ENCODE measurements at regions of chr11 and their contacts with region 1.

Region 1: GRCh38 chr11:11028017-11028692 is 170.3 kb upstream of the ZBED5 start:
- DNase-seq: peak; percentile 86
- ATAC-seq: peak; percentile 99
- H3K4me3 Mint-ChIP-seq: no peak overlapping the region
- H3K27ac Mint-ChIP-seq: no peak overlapping the region
- H3K4me1 Mint-ChIP-seq: 0 out of 2 replicates have a peak, but pooled peaks cover 2% of the 10 kb centered on the region
- H3K27me3 Mint-ChIP-seq: no peaks in the 10 kb centered on the region; the same call in 1 of the 2 replicates
- CTCF ChIP-seq: peak; percentile 75

Region 2: DNA sequence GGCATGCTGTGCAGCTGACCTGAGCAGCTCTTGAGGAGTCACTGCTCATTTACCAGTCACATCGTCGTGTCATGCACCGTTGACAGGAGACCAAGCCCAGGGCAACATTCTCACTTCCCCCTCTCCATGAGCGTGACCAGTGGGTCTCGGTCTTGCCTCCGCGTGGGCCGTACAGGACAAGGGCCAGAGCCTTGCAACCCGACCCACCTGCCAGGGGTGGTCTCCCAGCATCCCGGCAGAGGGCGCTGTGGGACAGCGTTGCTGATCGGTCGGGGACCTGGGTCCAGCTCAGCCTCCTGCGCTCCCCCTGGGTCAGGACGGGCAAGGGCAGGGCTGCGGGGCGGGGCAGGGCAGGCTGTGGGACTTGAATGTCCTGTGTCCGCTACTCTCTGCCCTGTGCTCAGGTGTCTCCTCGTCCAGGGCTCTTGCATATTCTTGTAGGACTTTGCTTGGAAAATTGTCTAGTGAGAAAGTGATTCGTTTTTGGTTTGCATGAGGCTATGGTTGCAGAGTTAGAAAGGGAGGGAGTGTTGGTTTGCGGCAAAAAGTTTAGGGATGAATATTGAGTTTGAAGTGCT is 235.7 kb before region 1 on chr11:
- CTCF ChIA-PET with region 1: interaction called, 19 read pairs
- POLR2A ChIA-PET with region 1: no interaction called
- DNase-seq: peak; percentile 98
- ATAC-seq: peak; percentile 93
- H3K4me3 Mint-ChIP-seq: peak overlapping the region; percentile 27; the same call in 1 of the 2 replicates
- H3K27ac Mint-ChIP-seq: no peak overlapping the region
- H3K4me1 Mint-ChIP-seq: peaks cover 4% of the 10 kb centered on the region
- H3K27me3 Mint-ChIP-seq: peaks cover 3% of the 10 kb centered on the region; the same call in 1 of the 2 replicates
- CTCF ChIP-seq: peak; percentile 94

Region 3: GRCh38 chr11:11016068-11016467 is 12.1 kb before region 1 on chr11:
- CTCF ChIA-PET with region 1: interaction called, 15 read pairs
- POLR2A ChIA-PET with region 1: no interaction called
- DNase-seq: no peak
- ATAC-seq: no peak
- H3K4me3 Mint-ChIP-seq: no peak overlapping the region
- H3K27ac Mint-ChIP-seq: no peak overlapping the region
- H3K4me1 Mint-ChIP-seq: peaks cover 17% of the 10 kb centered on the region
- H3K27me3 Mint-ChIP-seq: no peaks in the 10 kb centered on the region
- CTCF ChIP-seq: no peak

Region 4: DNA sequence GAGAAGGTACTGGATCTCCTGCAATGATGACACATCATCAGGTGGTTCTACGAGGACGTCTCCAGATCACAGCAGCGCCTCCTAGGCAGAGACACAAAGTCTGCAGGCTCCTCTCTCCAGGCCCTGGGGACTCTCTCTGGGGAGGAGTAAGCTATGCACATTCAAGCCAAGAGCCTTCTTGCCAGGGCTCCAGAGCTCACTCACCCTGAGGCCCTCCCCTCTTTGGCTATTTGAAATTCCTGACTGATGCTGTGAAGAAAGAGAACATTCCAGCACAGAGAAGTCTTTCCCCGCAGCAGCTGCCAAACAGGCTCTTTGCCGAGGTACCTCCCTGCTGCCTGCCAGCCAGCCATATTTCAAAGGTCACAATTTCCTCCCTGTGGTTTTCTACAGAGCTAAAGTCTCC is 120.0 kb after region 1 on chr11:
- CTCF ChIA-PET with region 1: interaction called, 19 read pairs
- POLR2A ChIA-PET with region 1: no interaction called
- DNase-seq: peak; percentile 66
- ATAC-seq: peak; percentile 99
- H3K4me3 Mint-ChIP-seq: no peak overlapping the region
- H3K27ac Mint-ChIP-seq: peak overlapping the region; percentile 68; the same call in 1 of the 2 replicates
- H3K4me1 Mint-ChIP-seq: peaks cover 15% of the 10 kb centered on the region
- H3K27me3 Mint-ChIP-seq: peaks cover 3% of the 10 kb centered on the region
- CTCF ChIP-seq: no peak

Region 5: GRCh38 chr11:11173316-11174025 is 145.3 kb after region 1 on chr11:
- CTCF ChIA-PET with region 1: interaction called, 12 read pairs
- POLR2A ChIA-PET with region 1: no interaction called
- DNase-seq: no peak
- ATAC-seq: no peak
- H3K4me3 Mint-ChIP-seq: no peak overlapping the region
- H3K27ac Mint-ChIP-seq: no peak overlapping the region
- H3K4me1 Mint-ChIP-seq: 0 out of 2 replicates have a peak, but pooled peaks cover 2% of the 10 kb centered on the region
- H3K27me3 Mint-ChIP-seq: no peaks in the 10 kb centered on the region
- CTCF ChIP-seq: no peak

Region 6: DNA sequence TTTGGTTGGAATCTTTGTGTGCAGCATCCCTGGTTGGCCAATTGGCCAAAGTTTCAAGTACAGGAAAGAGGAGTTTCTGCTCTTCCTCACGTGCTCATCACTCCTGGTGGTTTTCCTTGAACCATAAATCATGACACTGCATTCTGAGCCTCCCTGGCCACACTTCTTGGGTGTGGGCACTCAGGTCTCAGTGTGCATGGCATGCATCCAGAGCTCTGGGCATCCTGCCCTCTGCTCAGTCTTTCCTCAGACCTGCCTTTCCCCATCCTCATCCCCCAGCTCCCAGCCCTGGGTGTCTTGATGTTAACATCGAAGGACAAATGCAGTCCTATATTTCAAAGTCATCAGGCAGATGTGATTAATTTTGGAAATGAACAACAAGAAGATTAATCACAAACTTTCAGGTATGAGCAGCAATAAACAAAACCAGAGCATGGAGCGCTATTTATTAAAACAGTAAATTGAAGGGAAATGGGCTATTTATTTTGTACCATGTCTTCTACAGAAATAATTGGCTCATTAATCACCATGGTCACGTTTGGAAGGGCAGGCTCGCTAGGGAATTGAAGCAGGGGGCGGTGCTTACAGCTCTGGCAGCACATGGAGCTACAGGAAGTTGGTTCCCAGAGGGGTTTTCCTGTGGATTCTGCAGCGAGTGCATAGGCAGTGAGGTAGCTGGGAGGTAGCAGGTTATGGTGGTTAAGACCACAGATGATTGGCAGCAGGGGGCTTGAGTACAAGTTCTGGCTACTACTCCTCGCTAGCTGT is 235.3 kb after region 1 on chr11:
- CTCF ChIA-PET with region 1: interaction called, 23 read pairs
- POLR2A ChIA-PET with region 1: no interaction called
- DNase-seq: no peak
- ATAC-seq: peak; percentile 29; the same call in 1 of the 2 replicates
- H3K4me3 Mint-ChIP-seq: no peak overlapping the region
- H3K27ac Mint-ChIP-seq: no peak overlapping the region
- H3K4me1 Mint-ChIP-seq: peaks cover 18% of the 10 kb centered on the region
- H3K27me3 Mint-ChIP-seq: no peaks in the 10 kb centered on the region; the same call in 1 of the 2 replicates
- CTCF ChIP-seq: no peak